ENCODE measurements at regions of chr4 and their contacts with region 1.

Region 1: DNA sequence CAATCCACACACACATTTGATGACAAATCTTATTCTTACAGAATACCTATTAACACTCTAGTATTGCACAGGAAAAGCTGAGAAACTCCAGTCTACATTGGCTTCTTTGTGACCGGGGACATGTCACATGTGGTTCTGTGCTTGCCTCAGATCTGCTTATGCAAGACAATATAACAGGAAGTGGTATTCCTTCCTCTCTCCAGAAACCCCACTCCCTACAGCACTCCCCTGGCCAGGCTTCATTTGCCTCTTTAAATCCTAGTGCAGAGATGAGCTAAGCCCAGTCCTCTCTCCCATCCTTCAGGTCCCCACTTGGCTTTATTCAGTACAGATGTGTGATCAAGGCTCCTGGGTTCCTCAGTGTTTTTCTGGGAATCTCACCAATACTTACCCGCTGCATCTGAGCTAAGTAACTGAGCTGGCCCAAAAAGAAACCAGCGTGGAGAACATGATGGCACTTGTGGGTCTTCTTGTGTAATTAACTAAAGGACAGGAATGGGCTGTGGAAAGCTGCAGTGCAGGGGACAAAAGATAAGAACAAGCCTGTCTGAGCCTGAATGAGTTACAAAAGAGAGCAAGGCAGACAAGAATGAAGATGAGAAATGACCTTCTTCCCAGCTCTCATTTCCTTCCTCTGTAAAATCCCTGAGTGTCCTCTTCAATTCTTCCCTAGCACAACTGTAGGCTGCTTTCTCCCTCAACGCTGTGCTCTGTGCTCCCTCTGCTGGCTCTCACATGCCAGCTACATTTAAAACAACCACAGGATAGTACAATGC is 105.6 kb downstream of the HNRNPD start:
- H3K4me3 ChIP-seq: no peak overlapping the region
- H3K27ac ChIP-seq: no peak overlapping the region
- H3K4me1 ChIP-seq: peaks cover 2% of the 10 kb centered on the region; the same call in 1 of the 2 replicates
- CTCF ChIP-seq: peak; percentile 45; the same call in 1 of the 2 replicates

Region 2: DNA sequence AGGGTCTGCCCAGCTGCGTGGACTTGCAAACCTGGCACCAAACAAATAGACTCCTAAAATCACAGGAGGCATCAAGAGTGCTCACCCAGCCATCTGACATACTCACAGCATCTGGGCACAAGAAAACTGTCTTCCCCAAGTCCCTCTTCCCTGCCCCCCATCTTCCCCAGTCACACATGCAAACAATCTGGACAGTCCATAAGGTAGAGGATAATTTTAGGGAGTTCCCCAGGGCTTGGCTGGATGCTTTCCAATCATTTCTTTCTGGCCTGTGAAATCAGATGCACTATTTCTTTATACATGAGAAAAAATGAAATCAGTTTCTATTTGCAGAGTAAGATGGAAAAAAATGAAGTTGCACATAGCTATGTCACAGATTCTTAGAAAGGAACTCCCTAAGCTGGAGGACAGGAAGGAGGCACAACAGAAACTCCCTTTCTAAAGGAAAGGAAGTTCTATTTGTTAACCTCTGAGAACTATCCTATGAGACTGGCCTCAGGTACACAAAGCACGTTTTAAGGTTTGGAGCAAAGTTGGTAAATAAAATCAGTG is 236.8 kb before region 1 on chr4:
- CTCF ChIA-PET with region 1: no interaction called
- POLR2A ChIA-PET with region 1: no interaction called
- H3K4me3 ChIP-seq: no peak overlapping the region
- H3K27ac ChIP-seq: no peak overlapping the region
- H3K4me1 ChIP-seq: no peaks in the 10 kb centered on the region
- CTCF ChIP-seq: no peak

Region 3: DNA sequence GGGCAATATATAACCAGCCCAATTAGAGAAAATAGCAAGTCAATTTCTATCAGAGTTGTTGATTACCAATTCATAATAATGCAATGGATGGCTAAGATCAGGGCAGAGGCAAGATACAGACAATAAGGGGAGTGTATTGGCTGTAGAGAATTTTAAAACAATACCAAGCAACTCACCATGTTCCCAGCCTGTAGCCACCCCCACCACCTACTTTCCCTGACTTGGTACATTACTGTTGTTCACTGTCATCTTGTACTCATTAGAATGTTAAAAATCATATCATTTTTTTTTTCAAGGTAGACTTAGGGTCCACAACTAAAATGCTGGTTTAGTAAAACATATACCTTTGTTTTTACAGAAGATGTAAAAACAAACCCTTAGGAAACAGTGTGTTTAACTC is 77.9 kb after region 1 on chr4:
- CTCF ChIA-PET with region 1: no interaction called
- POLR2A ChIA-PET with region 1: no interaction called
- H3K4me3 ChIP-seq: no peak overlapping the region
- H3K27ac ChIP-seq: no peak overlapping the region
- H3K4me1 ChIP-seq: no peaks in the 10 kb centered on the region
- CTCF ChIP-seq: no peak

Region 4: DNA sequence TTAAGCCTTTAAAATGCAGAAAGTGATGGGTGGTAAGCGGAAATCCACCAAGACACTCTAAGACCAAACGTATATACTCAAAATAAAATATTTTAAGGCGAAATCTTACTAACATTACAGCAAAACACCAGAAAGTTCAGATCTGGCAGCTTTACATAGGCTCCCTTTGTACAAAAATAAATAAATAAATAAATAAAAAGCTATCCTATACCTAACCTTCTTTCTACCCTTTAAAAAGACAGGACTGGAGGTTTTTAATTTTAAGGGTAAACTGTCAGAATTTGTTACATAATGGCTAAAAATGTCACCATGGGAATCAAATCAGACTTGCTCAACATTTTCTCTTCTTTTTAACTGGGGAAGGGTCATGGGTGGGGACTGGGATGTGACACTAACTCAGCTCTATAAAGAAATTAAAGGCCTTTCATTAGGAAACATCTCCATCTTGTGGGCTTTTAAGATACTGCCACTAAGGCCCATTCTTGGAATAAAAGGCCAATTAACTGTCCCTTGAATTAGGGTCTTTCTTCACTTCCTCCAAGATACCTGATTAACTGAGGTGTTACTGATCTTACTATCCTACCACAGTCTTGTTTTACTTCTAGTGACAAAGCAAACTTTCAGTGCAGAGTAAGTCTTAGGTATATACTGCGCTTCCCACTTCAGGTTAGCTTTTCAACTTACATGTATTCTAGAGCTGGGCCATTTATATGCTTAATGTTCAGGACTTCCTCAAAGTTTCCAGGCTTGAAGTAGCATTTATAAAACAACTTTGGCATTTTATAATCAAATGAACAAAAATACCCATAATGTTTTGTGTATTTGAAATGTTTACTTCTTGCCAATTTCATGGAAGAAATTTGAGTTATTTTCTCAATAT is 92.3 kb after region 1 on chr4:
- CTCF ChIA-PET with region 1: interaction called, 10 read pairs
- POLR2A ChIA-PET with region 1: no interaction called
- H3K4me3 ChIP-seq: no peak overlapping the region
- H3K27ac ChIP-seq: no peak overlapping the region
- H3K4me1 ChIP-seq: no peaks in the 10 kb centered on the region
- CTCF ChIP-seq: no peak

Region 5: DNA sequence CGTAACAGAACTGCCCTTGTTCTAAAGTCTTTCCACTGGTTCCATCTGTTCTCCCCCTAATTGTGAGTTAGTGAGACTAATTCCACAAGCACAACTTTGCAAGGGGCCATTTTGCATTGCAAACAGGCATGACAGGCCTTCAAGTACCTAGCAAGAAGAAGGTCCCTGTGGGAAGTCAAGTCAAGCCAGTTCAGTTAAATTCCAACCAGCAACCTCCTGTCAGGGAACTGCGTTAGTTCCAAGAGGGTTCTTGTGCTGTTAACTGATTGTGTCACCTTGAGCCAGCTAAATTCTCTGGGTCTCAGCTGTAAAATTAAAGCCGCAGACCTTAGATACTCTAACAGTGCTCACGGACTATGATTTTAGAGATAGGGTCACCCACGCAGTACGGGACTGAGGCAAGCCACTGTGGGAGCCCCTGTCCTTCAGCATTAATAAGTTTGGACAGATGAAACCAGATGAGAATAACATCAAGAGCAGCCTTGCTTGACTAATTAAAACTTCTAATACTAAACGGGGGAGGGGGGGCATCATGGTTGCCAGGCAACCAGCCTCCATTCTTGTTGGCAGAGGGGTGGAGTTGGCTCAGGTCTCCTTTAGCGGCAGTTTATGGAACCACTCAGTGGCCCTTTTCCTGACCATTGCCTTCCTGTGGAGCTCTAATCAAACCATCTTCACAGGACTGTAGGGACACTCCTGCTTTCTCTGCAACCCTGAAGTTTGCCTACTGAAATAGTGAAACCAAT is 317.6 kb after region 1 on chr4:
- CTCF ChIA-PET with region 1: no interaction called
- POLR2A ChIA-PET with region 1: no interaction called
- H3K4me3 ChIP-seq: no peak overlapping the region
- H3K27ac ChIP-seq: no peak overlapping the region
- H3K4me1 ChIP-seq: no peaks in the 10 kb centered on the region
- CTCF ChIP-seq: no peak

Measured in HEK293 (cell line).